MCF 10A (cell line): ENCODE measurements at regions of chr7 and their contacts with region 1.

Region 1: GRCh38 chr7:77798394-77799077 is at the starts of genes PHTF2 and TMEM60:
- DNase-seq: peak; percentile 100
- H3K4me3 Mint-ChIP-seq: peak within 1 kb of the TSS; percentile 96
- H3K27ac Mint-ChIP-seq: peak within 1 kb of the TSS; percentile 94
- H3K4me1 Mint-ChIP-seq: peaks cover 21% of the 10 kb centered on the region
- H3K27me3 Mint-ChIP-seq: no peaks in the 10 kb centered on the region
- CTCF ChIP-seq: peak; percentile 65
- total RNA-seq, gene PHTF2: 12.6 and 16.0 TPM in 2 replicates
- total RNA-seq, gene TMEM60: 7.1 and 11.6 TPM in 2 replicates

Region 2: DNA sequence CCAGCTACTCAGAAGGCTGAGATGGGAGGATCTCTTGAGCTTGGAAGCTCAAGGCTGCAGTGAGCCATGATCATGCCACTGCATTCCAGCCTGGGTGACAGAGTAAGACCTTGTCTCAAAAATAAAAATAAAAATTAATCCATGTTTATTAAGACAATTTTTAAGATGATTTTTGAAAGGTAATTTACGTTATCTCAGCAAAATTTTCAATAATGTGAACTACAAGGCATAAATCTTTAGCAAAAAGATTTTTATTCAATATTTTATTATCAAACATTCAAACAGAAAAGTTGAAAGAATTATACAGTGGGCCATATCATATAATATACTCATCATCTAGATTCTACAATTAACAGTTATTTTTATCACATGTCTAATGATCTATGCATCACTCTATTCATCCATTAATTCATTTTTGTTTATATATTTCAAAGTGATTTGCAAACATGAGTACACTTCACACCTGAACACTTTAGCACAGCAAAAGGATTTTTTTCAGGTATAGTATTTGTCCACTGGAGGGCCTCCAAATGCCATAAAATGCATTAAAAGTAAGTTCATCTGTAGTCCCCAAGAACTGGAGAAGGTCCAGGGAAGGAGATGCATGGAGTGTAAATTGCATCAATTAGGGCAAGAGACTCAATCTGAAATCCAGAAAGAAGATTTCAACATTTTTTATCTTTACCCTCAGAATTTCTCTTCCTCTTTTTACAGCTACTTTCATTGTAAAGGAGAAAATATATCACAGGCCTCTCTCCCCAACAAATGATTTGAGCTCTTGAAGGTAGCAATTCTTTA is 140.9 kb before region 1 on chr7:
- CTCF ChIA-PET with region 1: interaction called, 14 read pairs
- POLR2A ChIA-PET with region 1: no interaction called
- intact Hi-C with region 1: no loop called
- DNase-seq: peak; percentile 65
- H3K4me3 Mint-ChIP-seq: no peak overlapping the region
- H3K27ac Mint-ChIP-seq: no peak overlapping the region
- H3K4me1 Mint-ChIP-seq: peaks cover 2% of the 10 kb centered on the region
- H3K27me3 Mint-ChIP-seq: no peaks in the 10 kb centered on the region
- CTCF ChIP-seq: peak; percentile 56

Region 3: DNA sequence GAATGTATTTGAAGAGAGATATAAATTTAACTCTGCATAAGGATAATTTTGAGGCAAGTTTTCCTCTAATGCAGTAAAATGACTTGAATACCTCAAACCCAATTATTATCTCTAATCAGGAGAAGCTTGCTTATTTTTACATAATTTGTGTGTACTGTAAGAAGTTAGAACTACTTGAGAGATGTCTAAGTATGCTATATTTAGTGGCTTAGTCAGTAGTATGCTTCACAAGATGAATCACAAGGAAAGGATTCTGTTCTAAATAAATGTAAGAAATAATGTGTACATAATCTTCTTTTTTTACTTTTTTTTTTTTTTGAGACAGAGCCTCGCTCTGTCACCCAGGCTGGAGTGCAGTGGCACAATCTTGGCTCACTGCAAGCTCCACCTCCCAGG is 13.8 kb after region 1 on chr7:
- CTCF ChIA-PET with region 1: interaction called, 16 read pairs
- POLR2A ChIA-PET with region 1: interaction called, 9 read pairs
- intact Hi-C with region 1: no loop called
- DNase-seq: no peak
- H3K4me3 Mint-ChIP-seq: no peak overlapping the region
- H3K27ac Mint-ChIP-seq: no peak overlapping the region
- H3K4me1 Mint-ChIP-seq: no peaks in the 10 kb centered on the region
- H3K27me3 Mint-ChIP-seq: no peaks in the 10 kb centered on the region
- CTCF ChIP-seq: no peak

Region 4: DNA sequence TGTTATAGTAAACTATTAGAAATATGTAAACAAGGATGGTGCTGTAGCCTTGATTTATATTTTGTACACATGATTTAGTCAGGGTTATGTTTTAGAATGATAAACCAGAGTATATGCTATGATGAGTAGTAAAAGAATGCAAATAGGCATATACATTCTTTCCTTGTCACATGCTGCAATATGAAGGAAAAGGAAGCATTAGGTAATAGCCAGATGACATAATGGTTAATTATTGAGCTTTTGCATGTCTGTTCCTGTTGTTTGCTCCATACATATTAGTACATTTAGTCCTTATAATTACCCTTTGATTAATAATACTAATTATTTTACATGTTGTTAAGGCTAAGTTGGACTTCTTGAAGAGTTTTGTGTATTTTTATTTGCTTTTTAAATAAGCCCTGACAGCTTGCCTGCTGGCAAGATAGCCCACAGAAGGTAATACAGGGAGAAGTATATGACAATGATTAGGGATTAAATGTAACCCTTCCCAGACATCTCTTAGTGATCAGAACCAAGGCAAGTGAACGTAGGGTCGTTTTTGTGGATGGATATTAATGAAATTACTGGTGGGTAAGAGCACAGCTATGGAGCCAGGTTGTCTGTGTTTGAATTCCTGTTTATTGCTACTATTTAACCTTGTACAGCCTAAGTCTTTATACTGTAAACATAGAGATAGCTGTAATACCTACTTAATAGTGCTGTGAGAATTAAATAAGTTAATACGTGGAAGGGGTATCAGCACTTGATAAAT is 68.4 kb after region 1 on chr7:
- CTCF ChIA-PET with region 1: interaction called, 6 read pairs
- POLR2A ChIA-PET with region 1: interaction called, 12 read pairs
- intact Hi-C with region 1: no loop called
- DNase-seq: peak; percentile 40
- H3K4me3 Mint-ChIP-seq: no peak overlapping the region
- H3K27ac Mint-ChIP-seq: no peak overlapping the region
- H3K4me1 Mint-ChIP-seq: peaks cover 11% of the 10 kb centered on the region
- H3K27me3 Mint-ChIP-seq: no peaks in the 10 kb centered on the region
- CTCF ChIP-seq: no peak

Region 5: DNA sequence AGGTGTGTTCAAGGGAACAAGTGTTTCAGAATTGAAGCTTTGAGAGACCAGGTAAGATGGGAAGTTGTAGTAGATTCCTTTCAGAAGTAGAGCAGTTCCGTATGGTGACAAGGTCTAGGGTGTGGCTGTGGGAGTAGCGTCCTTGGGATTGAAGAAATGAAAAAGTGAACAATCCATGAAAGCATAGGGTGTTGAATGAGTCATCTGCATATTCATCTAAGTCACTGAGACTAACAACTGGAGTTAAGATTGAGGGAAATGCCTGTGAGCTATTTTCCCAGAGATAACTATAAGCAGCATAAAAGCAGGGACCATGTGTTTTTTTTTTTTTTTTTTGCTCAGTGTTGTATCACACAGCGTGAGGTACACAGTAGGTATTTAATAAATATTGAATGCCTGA is 134.9 kb after region 1 on chr7:
- CTCF ChIA-PET with region 1: interaction called, 12 read pairs
- POLR2A ChIA-PET with region 1: interaction called, 7 read pairs
- intact Hi-C with region 1: loop called (anchors 2 kb)
- DNase-seq: peak; percentile 43
- H3K4me3 Mint-ChIP-seq: no peak overlapping the region
- H3K27ac Mint-ChIP-seq: peak overlapping the region; percentile 20
- H3K4me1 Mint-ChIP-seq: peaks cover 8% of the 10 kb centered on the region
- H3K27me3 Mint-ChIP-seq: no peaks in the 10 kb centered on the region
- CTCF ChIP-seq: no peak